HepG2 (cell line): ENCODE measurements at regions of chr4 and their contacts with region 1.

Region 1: DNA sequence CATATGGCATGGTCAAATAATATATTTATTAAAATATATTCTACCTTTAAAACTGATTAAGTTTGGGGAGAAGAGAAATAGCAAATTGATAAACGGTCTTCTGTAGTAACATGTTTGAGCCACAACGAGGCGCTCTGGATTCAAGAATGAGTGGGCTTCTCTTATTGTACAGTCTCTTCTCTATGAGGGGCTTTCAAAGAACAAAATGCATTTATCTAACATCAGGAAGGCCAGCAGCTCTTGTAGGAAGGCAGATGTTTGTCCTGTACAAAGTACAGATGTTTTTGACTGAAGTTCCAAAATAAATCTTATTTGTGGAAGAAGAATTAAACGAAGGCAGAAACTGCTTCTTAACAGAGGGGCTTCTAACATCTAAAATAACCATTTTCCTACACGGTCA is 153.6 kb downstream of the RASL11B start:
- DNase-seq: peak; percentile 66
- ATAC-seq: peak; percentile 16; the same call in 1 of the 3 replicates
- H3K4me3 ChIP-seq: no peak overlapping the region
- H3K27ac ChIP-seq: no peak overlapping the region
- H3K4me1 ChIP-seq: peaks cover 48% of the 10 kb centered on the region
- H3K27me3 ChIP-seq: no peaks in the 10 kb centered on the region
- CTCF ChIP-seq: peak; percentile 76
- EP300 ChIP-seq: no peak
- POLR2A ChIP-seq: no peak
- RAD21 ChIP-seq: peak; percentile 83

Region 2: GRCh38 chr4:53119680-53120079 is 104.0 kb after region 1 on chr4:
- CTCF ChIA-PET with region 1: no interaction called
- POLR2A ChIA-PET with region 1: interaction called, 3 read pairs
- in situ Hi-C with region 1: no loop called
- intact Hi-C with region 1: loop called (anchors 5 kb)
- DNase-seq: peak; percentile 40
- ATAC-seq: peak; percentile 57
- H3K4me3 ChIP-seq: no peak overlapping the region
- H3K27ac ChIP-seq: peak overlapping the region; percentile 9
- H3K4me1 ChIP-seq: peaks cover 54% of the 10 kb centered on the region
- H3K27me3 ChIP-seq: no peaks in the 10 kb centered on the region
- CTCF ChIP-seq: no peak
- EP300 ChIP-seq: no peak
- POLR2A ChIP-seq: no peak
- RAD21 ChIP-seq: no peak

Region 3: GRCh38 chr4:53196882-53197771 is 181.4 kb after region 1 on chr4:
- CTCF ChIA-PET with region 1: interaction called, 5 read pairs
- POLR2A ChIA-PET with region 1: no interaction called
- in situ Hi-C with region 1: loop called (anchors 5 kb)
- intact Hi-C with region 1: loop called (anchors 1 kb)
- DNase-seq: peak; percentile 65
- ATAC-seq: peak; percentile 59; the same call in 2 of the 3 replicates
- H3K4me3 ChIP-seq: no peak overlapping the region
- H3K27ac ChIP-seq: no peak overlapping the region
- H3K4me1 ChIP-seq: 0 out of 2 replicates have a peak, but pooled peaks cover 2% of the 10 kb centered on the region
- H3K27me3 ChIP-seq: no peaks in the 10 kb centered on the region; a peak in 1 of 5 replicates
- CTCF ChIP-seq: peak; percentile 74
- EP300 ChIP-seq: no peak
- POLR2A ChIP-seq: no peak
- RAD21 ChIP-seq: peak; percentile 64

Region 4: GRCh38 chr4:53267026-53267425 is 251.3 kb after region 1 on chr4:
- CTCF ChIA-PET with region 1: no interaction called
- POLR2A ChIA-PET with region 1: no interaction called
- in situ Hi-C with region 1: no loop called
- intact Hi-C with region 1: no loop called
- DNase-seq: no peak
- ATAC-seq: no peak
- H3K4me3 ChIP-seq: no peak overlapping the region
- H3K27ac ChIP-seq: no peak overlapping the region
- H3K4me1 ChIP-seq: no peaks in the 10 kb centered on the region
- H3K27me3 ChIP-seq: no peaks in the 10 kb centered on the region
- CTCF ChIP-seq: no peak
- EP300 ChIP-seq: no peak
- POLR2A ChIP-seq: no peak
- RAD21 ChIP-seq: no peak

Region 5: GRCh38 chr4:53444954-53445353 is 429.3 kb after region 1 on chr4:
- CTCF ChIA-PET with region 1: no interaction called
- POLR2A ChIA-PET with region 1: no interaction called
- in situ Hi-C with region 1: no loop called
- intact Hi-C with region 1: loop called (anchors 5 kb)
- DNase-seq: peak; percentile 5
- ATAC-seq: peak; percentile 84
- H3K4me3 ChIP-seq: no peak overlapping the region
- H3K27ac ChIP-seq: no peak overlapping the region
- H3K4me1 ChIP-seq: 0 out of 2 replicates have a peak, but pooled peaks cover 6% of the 10 kb centered on the region
- H3K27me3 ChIP-seq: no peaks in the 10 kb centered on the region
- CTCF ChIP-seq: no peak
- EP300 ChIP-seq: no peak
- POLR2A ChIP-seq: no peak
- RAD21 ChIP-seq: no peak

Region 6: GRCh38 chr4:53601251-53601764 is 585.6 kb after region 1 on chr4:
- CTCF ChIA-PET with region 1: interaction called, 3 read pairs
- POLR2A ChIA-PET with region 1: no interaction called
- in situ Hi-C with region 1: loop called (anchors 25 kb)
- intact Hi-C with region 1: loop called (anchors 2 kb)
- DNase-seq: peak; percentile 27
- ATAC-seq: peak; percentile 94
- H3K4me3 ChIP-seq: no peak overlapping the region
- H3K27ac ChIP-seq: no peak overlapping the region
- H3K4me1 ChIP-seq: no peaks in the 10 kb centered on the region
- H3K27me3 ChIP-seq: no peaks in the 10 kb centered on the region; a peak in 1 of 5 replicates
- CTCF ChIP-seq: peak; percentile 68
- EP300 ChIP-seq: no peak
- POLR2A ChIP-seq: no peak
- RAD21 ChIP-seq: no peak

Region 7: GRCh38 chr4:53908661-53909078 is 893.0 kb after region 1 on chr4:
- CTCF ChIA-PET with region 1: no interaction called
- POLR2A ChIA-PET with region 1: no interaction called
- in situ Hi-C with region 1: loop called (anchors 25 kb)
- intact Hi-C with region 1: loop called (anchors 1 kb)
- DNase-seq: peak; percentile 83
- ATAC-seq: peak; percentile 90
- H3K4me3 ChIP-seq: peak overlapping the region in 1 of 3 experiments; percentile 15; a peak in 1 of 6 replicates
- H3K27ac ChIP-seq: no peak overlapping the region
- H3K4me1 ChIP-seq: peaks cover 41% of the 10 kb centered on the region
- H3K27me3 ChIP-seq: peaks cover 0 to 10% of the 10 kb centered on the region in 2 experiments; a peak in 3 of 5 replicates
- CTCF ChIP-seq: peak; percentile 87
- EP300 ChIP-seq: peak; percentile 19 to 59; a peak in 1 of 4 replicates
- POLR2A ChIP-seq: no peak
- RAD21 ChIP-seq: peak; percentile 84

Region 8: DNA sequence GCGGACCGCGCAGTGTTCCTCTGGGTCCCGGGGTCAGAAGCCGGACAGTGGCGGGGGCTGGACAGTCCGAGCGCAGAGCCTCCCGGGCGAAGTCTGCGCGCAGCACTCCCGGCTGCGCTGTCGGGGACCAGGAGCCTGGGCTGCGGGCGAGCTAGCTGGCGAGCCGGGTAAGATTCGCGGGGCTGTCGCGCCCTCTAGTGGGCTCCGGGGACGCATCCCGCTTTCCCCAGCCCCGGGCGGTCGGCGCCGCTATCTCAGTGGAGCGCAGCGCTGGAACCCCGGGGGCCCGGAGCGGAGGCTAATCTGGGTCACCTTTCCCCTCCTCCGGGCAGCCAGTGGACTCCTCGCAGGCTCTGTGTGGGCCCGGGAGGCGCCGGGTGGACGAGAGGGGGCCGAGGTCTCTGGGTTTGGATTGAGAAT is 1217.6 kb after region 1 on chr4:
- CTCF ChIA-PET with region 1: interaction called, 5 read pairs
- POLR2A ChIA-PET with region 1: interaction called, 3 read pairs
- in situ Hi-C with region 1: loop called (anchors 10 kb)
- intact Hi-C with region 1: loop called (anchors 1 kb)
- DNase-seq: peak; percentile 55
- ATAC-seq: peak; percentile 94
- H3K4me3 ChIP-seq: peak overlapping the region; percentile 45 to 75 (median 52); a peak in 5 of 6 replicates
- H3K27ac ChIP-seq: no peak overlapping the region
- H3K4me1 ChIP-seq: peaks cover 30% of the 10 kb centered on the region; the same call in 1 of the 2 replicates
- H3K27me3 ChIP-seq: peaks cover 14 to 45% of the 10 kb centered on the region in 2 experiments
- CTCF ChIP-seq: peak; percentile 93
- EP300 ChIP-seq: no peak
- POLR2A ChIP-seq: no peak
- RAD21 ChIP-seq: peak; percentile 97